ENCODE measurements at regions of chr7 and their contacts with region 1.

Region 1: DNA sequence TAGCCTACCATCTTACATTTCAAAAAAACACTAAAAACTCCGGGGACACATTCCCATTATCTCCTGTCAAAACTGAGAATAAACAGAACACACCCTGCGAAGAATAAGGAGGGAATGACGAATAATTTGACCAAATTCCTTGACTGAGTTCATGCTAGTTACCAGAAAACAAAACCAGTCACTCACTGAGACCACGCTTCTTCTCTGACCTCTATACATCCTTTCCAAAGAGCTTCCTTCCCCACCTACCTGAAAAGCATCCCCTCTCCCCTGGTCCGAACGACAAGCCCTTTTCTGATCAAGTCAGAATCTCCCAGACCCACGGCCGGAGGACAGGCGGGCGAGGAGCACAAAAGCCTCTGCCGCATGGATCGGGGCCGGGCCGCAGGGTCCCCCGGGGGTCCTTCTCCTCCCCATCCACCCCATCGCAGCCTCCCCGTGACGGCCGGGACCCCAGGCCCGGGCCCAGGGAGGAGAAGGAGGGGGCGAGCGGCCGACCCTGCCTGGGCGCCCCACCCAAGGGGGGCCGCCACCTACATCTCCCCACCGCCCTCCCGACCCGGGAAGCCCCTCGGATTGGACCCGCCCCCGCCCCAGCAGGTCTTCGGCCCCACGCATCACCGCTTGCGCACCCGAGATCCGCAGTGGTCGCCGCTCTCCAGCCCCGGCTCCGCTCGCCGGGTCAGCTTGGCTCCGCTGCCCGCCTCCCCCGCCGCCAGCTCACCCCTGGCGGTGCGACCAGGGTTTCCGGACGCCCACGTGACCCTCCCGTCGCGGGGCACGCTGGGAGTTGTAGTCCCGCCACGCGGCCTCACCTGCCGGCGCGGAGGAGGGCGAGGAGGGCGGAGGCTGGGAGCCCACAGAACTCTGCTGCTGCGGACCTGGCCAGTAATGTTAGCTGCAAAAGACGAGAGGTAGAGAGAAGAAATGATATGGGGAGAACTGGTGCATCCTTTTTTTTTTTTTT is at the start of gene SLC37A3:
- DNase-seq: no peak
- H3K4me3 ChIP-seq: peak within 1 kb of the TSS; percentile 98 to 99
- H3K27ac ChIP-seq: peak within 1 kb of the TSS; percentile 95
- H3K4me1 ChIP-seq: peaks cover 14% of the 10 kb centered on the region
- H3K27me3 ChIP-seq: no peaks in the 10 kb centered on the region
- CTCF ChIP-seq: no peak
- POLR2A ChIP-seq: peak in 1 of 2 donors; percentile 62
- total RNA-seq, gene SLC37A3: 80.8 TPM

Region 2: DNA sequence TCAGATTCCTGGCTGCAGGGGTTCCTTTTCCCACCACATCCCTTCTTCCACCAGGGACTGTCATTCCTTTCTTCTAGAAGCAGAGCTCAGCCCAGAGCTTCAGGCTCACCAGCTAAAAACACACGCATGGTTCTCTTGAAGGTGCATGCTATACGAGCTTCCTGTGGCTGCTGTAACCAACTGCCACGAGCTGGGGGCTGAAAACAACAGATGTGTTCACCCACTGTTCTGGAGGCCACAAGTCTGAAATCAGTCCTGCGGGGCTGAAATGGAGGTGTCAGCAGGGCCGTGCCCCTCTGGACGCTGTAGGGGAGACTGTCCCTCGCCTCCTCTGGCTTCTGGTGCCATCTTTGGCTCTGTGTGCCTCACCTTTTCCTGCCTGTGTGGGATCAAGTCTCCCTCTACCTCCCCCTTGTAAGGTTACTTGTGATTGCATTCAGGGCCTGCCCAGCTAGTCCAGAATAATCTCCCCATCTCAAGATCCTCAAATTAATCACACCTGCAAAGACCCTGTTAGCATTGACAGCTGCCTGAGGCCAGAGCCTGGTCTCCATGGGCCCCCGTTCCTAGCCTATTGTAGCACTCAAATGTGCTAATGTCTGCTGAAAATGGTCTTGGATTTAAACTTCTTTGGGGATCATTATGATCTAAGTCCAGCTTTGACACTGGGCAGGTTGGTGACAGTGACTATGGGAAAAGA is 19.5 kb after region 1 on chr7:
- intact Hi-C with region 1: no loop called
- DNase-seq: no peak
- H3K4me3 ChIP-seq: no peak overlapping the region
- H3K27ac ChIP-seq: no peak overlapping the region
- H3K4me1 ChIP-seq: no peaks in the 10 kb centered on the region
- H3K27me3 ChIP-seq: no peaks in the 10 kb centered on the region
- CTCF ChIP-seq: no peak
- POLR2A ChIP-seq: no peak

Region 3: DNA sequence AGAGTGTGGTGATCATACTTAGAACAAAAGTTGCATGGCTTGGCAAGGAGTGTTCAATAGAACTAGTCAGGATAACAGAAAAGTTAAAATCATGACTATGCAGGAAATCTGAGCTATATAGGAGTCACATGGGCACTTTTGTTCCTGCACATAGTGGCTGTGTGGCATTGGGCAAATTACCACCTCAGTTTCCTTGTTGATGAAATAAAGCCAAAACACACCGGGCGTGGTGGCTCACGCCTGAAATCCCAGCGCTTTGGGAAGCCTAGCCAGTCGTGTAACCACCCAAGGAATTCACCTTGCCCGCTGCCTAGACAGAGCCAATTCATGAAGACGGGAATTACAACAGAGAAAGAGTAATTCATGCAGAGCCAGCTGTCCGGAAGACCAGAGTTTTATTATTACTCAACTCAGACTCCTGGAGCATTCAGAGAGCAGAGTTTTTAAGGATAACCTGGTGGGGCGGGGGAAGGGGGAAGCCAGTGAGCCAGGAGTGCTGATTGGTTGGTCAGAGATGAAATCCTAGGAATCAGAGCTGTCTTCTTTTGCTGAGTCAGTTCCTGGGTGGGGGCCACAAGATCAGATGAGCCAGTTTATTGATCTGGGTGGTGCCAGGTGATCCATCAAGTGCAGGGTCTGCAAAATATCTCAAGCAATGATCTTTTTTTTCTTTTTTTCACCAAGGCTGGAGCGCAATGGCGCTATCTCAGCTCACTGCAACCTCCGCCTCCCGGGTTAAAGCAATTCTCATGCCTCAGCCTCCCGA is 87.6 kb after region 1 on chr7:
- intact Hi-C with region 1: loop called (anchors 10 kb)
- DNase-seq: no peak
- H3K4me3 ChIP-seq: no peak overlapping the region
- H3K27ac ChIP-seq: no peak overlapping the region
- H3K4me1 ChIP-seq: peaks cover 7% of the 10 kb centered on the region
- H3K27me3 ChIP-seq: no peaks in the 10 kb centered on the region
- CTCF ChIP-seq: no peak
- POLR2A ChIP-seq: no peak